Esophagus muscularis mucosa (tissue), 4 donors: ENCODE measurements at regions of chr6 and their contacts with region 1.

Region 1: DNA sequence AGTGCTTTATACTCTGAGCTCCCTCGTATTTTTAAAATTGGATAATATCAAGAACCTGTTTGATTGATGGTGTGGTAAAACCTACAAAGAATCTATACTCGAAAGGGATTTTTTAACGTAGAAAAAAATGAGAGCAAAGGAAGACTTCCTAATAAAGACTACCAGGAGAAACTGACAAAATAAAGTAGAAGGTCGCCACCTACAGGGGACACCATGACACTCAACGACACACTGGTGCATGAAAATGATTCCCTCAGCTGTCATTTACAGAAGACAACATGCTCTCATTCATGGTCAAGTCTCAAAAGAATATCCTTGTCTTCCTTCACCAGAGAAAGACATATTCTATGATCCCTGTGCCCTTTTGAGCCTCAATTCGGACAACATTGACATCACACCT is 10.1 kb upstream of the NHSL1 start:
- DNase-seq: no peak
- H3K4me3 ChIP-seq: no peak overlapping the region
- H3K27ac ChIP-seq: no peak overlapping the region
- H3K4me1 ChIP-seq: no peaks in the 10 kb centered on the region
- H3K27me3 ChIP-seq: no peaks in the 10 kb centered on the region
- CTCF ChIP-seq: peak; percentile 68 to 74 (median 68)
- EP300 ChIP-seq: no peak
- POLR2A ChIP-seq: no peak

Region 2: GRCh38 chr6:138428944-138429598 is 80.3 kb before region 1 on chr6:
- intact Hi-C with region 1: loop called (anchors 1 kb)
- DNase-seq: no peak
- H3K4me3 ChIP-seq: peak overlapping the region; percentile 8 to 40 (median 32)
- H3K27ac ChIP-seq: peak overlapping the region; percentile 41 to 50 (median 44)
- H3K4me1 ChIP-seq: peaks cover 14 to 27% (median 22%) of the 10 kb centered on the region in 4 donors
- H3K27me3 ChIP-seq: no peaks in the 10 kb centered on the region
- CTCF ChIP-seq: peak; percentile 60 to 77 (median 63)
- EP300 ChIP-seq: no peak
- POLR2A ChIP-seq: no peak